ENCODE measurements at regions of chr7 and their contacts with region 1.

Region 1: GRCh38 chr7:16839646-16840045 is 34.8 kb upstream of the AGR2 start:
- DNase-seq: no peak
- H3K4me3 ChIP-seq: no peak overlapping the region
- H3K27ac ChIP-seq: no peak overlapping the region
- H3K4me1 ChIP-seq: no peaks in the 10 kb centered on the region
- H3K27me3 ChIP-seq: peaks cover 0 to 1% of the 10 kb centered on the region in 2 experiments
- CTCF ChIP-seq: no peak
- POLR2A ChIP-seq: no peak

Region 2: GRCh38 chr7:16816824-16817223 is 22.8 kb before region 1 on chr7:
- CTCF ChIA-PET with region 1: interaction called, 3 read pairs
- POLR2A ChIA-PET with region 1: no interaction called
- dilution Hi-C with region 1: no loop called
- intact Hi-C with region 1: loop called (anchors 1 kb)
- DNase-seq: no peak
- H3K4me3 ChIP-seq: no peak overlapping the region
- H3K27ac ChIP-seq: no peak overlapping the region
- H3K4me1 ChIP-seq: peaks cover under 1% of the 10 kb centered on the region
- H3K27me3 ChIP-seq: no peaks in the 10 kb centered on the region
- CTCF ChIP-seq: no peak
- POLR2A ChIP-seq: no peak

Region 3: GRCh38 chr7:16933296-16934279 is 93.9 kb after region 1 on chr7:
- CTCF ChIA-PET with region 1: no interaction called
- POLR2A ChIA-PET with region 1: no interaction called
- dilution Hi-C with region 1: no loop called
- intact Hi-C with region 1: no loop called
- DNase-seq: no peak
- H3K4me3 ChIP-seq: no peak overlapping the region
- H3K27ac ChIP-seq: no peak overlapping the region
- H3K4me1 ChIP-seq: peaks cover 7% of the 10 kb centered on the region
- H3K27me3 ChIP-seq: no peaks in the 10 kb centered on the region
- CTCF ChIP-seq: no peak
- POLR2A ChIP-seq: no peak